Naive thymus-derived CD4-positive, alpha-beta T cell (primary cell): ENCODE measurements at regions of chr3 and their contacts with region 1.

Region 1: DNA sequence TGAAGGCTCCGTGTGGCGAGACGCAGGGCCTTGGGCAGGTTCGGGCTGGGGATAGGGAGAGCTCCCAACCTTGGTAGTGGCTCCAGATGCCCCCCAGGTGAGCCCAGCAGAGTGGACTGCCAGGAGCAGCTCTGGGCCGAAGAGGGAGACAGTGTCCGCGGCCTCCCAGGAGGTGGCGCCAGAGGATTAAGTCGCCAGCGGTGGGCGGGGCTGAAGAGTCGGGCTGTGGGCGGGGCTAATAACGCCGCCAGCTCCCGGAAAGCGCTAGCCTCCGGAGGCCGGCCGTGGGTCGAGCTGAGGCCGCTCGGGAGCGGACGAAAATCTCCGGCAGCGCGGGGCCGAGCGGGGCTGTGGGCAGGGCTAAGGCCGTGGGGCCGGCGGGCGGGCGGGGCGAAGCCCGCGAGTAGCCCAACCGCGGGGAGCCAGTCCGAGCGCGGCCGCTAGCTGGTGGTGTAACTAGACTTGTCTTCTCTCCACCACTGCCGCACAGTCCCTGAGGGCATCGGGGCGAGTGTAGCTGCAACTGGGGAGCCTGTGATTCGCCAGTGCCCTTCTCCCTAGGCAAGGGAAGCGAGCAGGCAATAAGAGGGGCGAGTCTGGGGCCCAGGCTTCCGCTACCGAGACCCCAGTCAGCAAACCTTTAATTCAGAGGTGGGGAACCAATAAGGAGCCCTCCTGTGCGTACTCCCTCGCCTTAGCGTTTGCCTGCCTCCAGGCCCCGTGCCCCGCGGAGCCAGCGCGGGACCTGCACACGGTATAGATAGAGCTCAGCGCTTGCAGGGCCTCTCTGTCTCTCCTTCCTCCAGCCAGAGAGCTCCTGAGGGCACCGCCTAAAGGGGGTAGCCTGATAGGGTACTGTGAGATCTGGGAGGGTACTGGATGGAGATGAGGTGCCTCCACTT is 14.4 kb upstream of the BSN start:
- DNase-seq: peak; percentile 77 to 97 (median 85)
- ATAC-seq: peak; percentile 99
- H3K4me3 ChIP-seq: peak overlapping the region; percentile 90
- H3K4me3 Mint-ChIP-seq: peak overlapping the region; percentile 75 to 84 (median 80)
- H3K27ac ChIP-seq: peak overlapping the region; percentile 78
- H3K27ac Mint-ChIP-seq: peak overlapping the region in 6 of 9 donors; percentile 14 to 69 (median 33)
- H3K4me1 ChIP-seq: peaks cover 4 to 5% of the 10 kb centered on the region in 2 donors
- H3K4me1 Mint-ChIP-seq: peaks cover 0 to 9% (median 5%) of the 10 kb centered on the region in 7 donors
- H3K27me3 ChIP-seq: no peaks in the 10 kb centered on the region
- H3K27me3 Mint-ChIP-seq: peaks cover 0 to 24% (median 4%) of the 10 kb centered on the region in 5 donors

Region 2: GRCh38 chr3:49411968-49412631 is 127.8 kb before region 1 on chr3 and contains the starts of genes RHOA and TCTA:
- CTCF ChIA-PET with region 1: no interaction called
- POLR2A ChIA-PET with region 1: no interaction called
- intact Hi-C with region 1: no loop called
- DNase-seq: peak; percentile 94 to 100 (median 99)
- ATAC-seq: peak; percentile 90
- H3K4me3 ChIP-seq: peak within 1 kb of the TSS; percentile 86
- H3K4me3 Mint-ChIP-seq: peak within 1 kb of the TSS; percentile 82 to 97 (median 94)
- H3K27ac ChIP-seq: peak within 1 kb of the TSS; percentile 96
- H3K27ac Mint-ChIP-seq: peak within 1 kb of the TSS; percentile 88 to 97 (median 95)
- H3K4me1 ChIP-seq: peaks cover 61 to 65% of the 10 kb centered on the region in 2 donors
- H3K4me1 Mint-ChIP-seq: peaks cover 51 to 82% (median 71%) of the 10 kb centered on the region in 7 donors
- H3K27me3 ChIP-seq: no peaks in the 10 kb centered on the region
- H3K27me3 Mint-ChIP-seq: peaks cover 0 to 2% (median 0%) of the 10 kb centered on the region in 5 donors
- total RNA-seq, gene RHOA: 212 to 411 (median 218) TPM
- total RNA-seq, gene TCTA: 24.9 to 34.5 (median 28.5) TPM

Region 3: DNA sequence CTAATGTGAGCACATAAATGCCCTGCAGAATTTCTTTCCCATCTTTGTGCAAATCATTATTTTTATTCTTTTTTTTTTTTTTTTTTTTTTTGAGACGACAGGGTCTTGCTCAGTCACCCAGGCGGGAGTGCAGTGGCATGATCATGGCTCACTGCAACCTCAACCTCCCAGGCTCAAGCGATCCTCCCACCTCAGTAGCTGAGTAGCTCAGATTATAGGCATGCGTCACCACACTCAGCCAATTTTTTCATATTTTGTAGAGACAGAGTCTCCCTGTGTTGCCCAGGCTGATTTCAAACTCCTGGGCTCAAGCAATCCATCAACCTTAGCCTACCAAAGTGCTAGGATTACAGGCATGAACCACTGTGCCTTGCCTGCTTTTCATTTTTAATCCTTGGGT is 46.9 kb before region 1 on chr3:
- CTCF ChIA-PET with region 1: no interaction called
- POLR2A ChIA-PET with region 1: no interaction called
- intact Hi-C with region 1: no loop called
- DNase-seq: no peak
- ATAC-seq: no peak
- H3K4me3 ChIP-seq: no peak overlapping the region
- H3K4me3 Mint-ChIP-seq: no peak overlapping the region
- H3K27ac ChIP-seq: no peak overlapping the region
- H3K27ac Mint-ChIP-seq: no peak overlapping the region
- H3K4me1 ChIP-seq: no peaks in the 10 kb centered on the region
- H3K4me1 Mint-ChIP-seq: peaks cover 5 to 16% (median 8%) of the 10 kb centered on the region in 7 donors
- H3K27me3 ChIP-seq: no peaks in the 10 kb centered on the region
- H3K27me3 Mint-ChIP-seq: no peaks in the 10 kb centered on the region

Region 4: GRCh38 chr3:49553692-49554632 is 14.1 kb after region 1 on chr3 and contains the start of gene BSN:
- CTCF ChIA-PET with region 1: interaction called, 14 read pairs
- POLR2A ChIA-PET with region 1: interaction called, 7 read pairs
- intact Hi-C with region 1: loop called (anchors 1 to 2 kb)
- DNase-seq: peak; percentile 81 to 92 (median 88)
- ATAC-seq: peak; percentile 91
- H3K4me3 ChIP-seq: peak within 1 kb of the TSS; percentile 75
- H3K4me3 Mint-ChIP-seq: peak within 1 kb of the TSS; percentile 80 to 92 (median 86)
- H3K27ac ChIP-seq: peak within 1 kb of the TSS; percentile 37
- H3K27ac Mint-ChIP-seq: peak within 1 kb of the TSS in 8 of 9 donors; percentile 20 to 92 (median 41)
- H3K4me1 ChIP-seq: peaks cover 0 to 20% of the 10 kb centered on the region in 2 donors
- H3K4me1 Mint-ChIP-seq: peaks cover 9 to 20% (median 13%) of the 10 kb centered on the region in 7 donors
- H3K27me3 ChIP-seq: no peaks in the 10 kb centered on the region
- H3K27me3 Mint-ChIP-seq: peaks cover 41 to 56% (median 46%) of the 10 kb centered on the region in 5 donors
- total RNA-seq, gene BSN: 0.12 to 0.16 (median 0.14) TPM

Region 5: GRCh38 chr3:49666592-49666991 is 126.7 kb after region 1 on chr3:
- CTCF ChIA-PET with region 1: interaction called, 111 read pairs
- POLR2A ChIA-PET with region 1: interaction called, 45 read pairs
- intact Hi-C with region 1: loop called (anchors 1 kb)
- DNase-seq: no peak
- ATAC-seq: no peak
- H3K4me3 ChIP-seq: no peak overlapping the region
- H3K4me3 Mint-ChIP-seq: no peak overlapping the region
- H3K27ac ChIP-seq: no peak overlapping the region
- H3K27ac Mint-ChIP-seq: no peak overlapping the region
- H3K4me1 ChIP-seq: no peaks in the 10 kb centered on the region
- H3K4me1 Mint-ChIP-seq: peaks cover 0 to 9% (median under 1%) of the 10 kb centered on the region in 7 donors
- H3K27me3 ChIP-seq: no peaks in the 10 kb centered on the region
- H3K27me3 Mint-ChIP-seq: peaks cover 0 to 8% (median 0%) of the 10 kb centered on the region in 5 donors

Region 6: DNA sequence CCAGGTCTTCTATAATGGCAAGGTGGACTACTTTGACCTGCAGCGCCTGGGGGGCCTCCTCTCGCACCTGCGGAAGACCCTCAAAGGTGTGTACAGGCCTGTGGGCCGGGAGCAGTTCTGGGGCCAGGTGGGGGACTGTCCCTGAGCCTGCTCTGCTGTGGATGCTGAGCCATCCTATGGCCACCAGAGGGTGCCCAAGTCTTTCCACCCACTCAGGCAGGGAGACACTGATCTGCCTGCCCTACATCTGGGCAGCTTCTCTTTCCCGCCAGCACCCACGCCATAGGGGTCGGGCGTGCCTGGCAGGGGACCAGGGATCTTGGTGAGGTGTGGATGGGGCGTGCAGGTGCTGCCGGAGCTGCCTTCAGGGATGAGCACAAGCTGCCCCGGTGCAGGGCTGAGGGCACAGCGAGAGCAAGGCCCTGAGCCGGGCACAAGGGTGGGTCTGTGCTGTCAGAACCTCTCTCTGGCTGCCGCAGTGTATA is 163.6 kb after region 1 on chr3:
- CTCF ChIA-PET with region 1: interaction called, 3 read pairs
- POLR2A ChIA-PET with region 1: no interaction called
- intact Hi-C with region 1: loop called in 1 of 2 experiments (anchors 1 kb)
- DNase-seq: peak; percentile 44 to 74 (median 65)
- ATAC-seq: peak; percentile 94
- H3K4me3 ChIP-seq: no peak overlapping the region
- H3K4me3 Mint-ChIP-seq: no peak overlapping the region
- H3K27ac ChIP-seq: no peak overlapping the region
- H3K27ac Mint-ChIP-seq: peak overlapping the region in 2 of 9 donors; percentile 8 to 52
- H3K4me1 ChIP-seq: no peaks in the 10 kb centered on the region
- H3K4me1 Mint-ChIP-seq: peaks cover 0 to 7% (median 0%) of the 10 kb centered on the region in 7 donors
- H3K27me3 ChIP-seq: no peaks in the 10 kb centered on the region
- H3K27me3 Mint-ChIP-seq: no peaks in the 10 kb centered on the region

Region 7: GRCh38 chr3:49906004-49906743 is 366.3 kb after region 1 on chr3:
- CTCF ChIA-PET with region 1: no interaction called
- POLR2A ChIA-PET with region 1: no interaction called
- intact Hi-C with region 1: loop called in 1 of 2 experiments (anchors 1 kb)
- DNase-seq: peak; percentile 16 to 60 (median 39)
- ATAC-seq: peak; percentile 53
- H3K4me3 ChIP-seq: no peak overlapping the region
- H3K4me3 Mint-ChIP-seq: peak overlapping the region; percentile 39 to 79 (median 64)
- H3K27ac ChIP-seq: peak overlapping the region; percentile 24
- H3K27ac Mint-ChIP-seq: peak overlapping the region; percentile 63 to 91 (median 87)
- H3K4me1 ChIP-seq: peaks cover 15 to 26% of the 10 kb centered on the region in 2 donors
- H3K4me1 Mint-ChIP-seq: peaks cover 18 to 41% (median 27%) of the 10 kb centered on the region in 7 donors
- H3K27me3 ChIP-seq: no peaks in the 10 kb centered on the region
- H3K27me3 Mint-ChIP-seq: no peaks in the 10 kb centered on the region

Region 8: DNA sequence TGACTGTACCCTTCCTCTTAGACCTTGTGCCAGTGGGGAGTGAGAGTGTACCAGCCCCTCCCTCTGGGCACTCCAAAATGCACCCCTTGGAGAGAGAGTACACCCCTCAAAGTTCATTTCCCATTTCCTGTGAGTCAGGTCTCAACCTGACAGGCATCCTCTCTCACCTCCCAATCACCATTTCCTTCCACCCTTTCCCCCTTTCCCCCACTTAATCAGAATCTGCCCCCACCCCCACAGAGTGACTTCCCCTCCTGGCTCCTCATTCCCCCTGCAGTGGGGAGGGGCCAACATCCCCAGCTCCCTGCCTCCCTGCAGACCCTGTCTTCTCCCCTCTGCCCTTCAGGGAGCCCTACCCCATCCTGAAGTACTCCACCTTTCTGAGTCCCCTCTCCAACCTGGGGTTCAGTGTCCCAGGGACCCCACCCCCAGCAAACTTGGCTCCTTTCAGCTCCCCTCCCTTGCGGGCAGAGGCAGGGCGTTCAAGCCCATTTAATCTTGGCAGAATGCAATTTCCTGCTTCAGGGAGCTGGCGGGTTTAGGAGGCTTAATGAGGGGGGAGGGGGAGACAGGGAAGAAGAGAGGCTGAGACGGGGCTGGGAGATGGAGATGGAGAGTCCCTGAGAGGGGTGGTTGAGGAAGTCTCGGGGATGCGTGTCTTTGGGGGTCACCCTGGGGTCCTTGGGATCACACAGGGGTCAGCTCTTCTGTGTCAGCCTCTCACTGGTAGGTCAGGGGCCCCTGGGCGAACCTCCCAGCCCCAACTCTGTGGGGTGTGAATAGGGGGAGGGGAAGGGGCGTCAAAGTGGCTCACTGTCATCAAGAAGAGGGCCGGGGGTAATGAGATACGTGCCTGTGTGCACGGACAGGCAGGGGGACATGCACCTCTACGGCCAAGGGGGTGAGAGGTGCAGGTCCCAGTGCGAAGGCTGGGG is 598.6 kb after region 1 on chr3:
- CTCF ChIA-PET with region 1: no interaction called
- POLR2A ChIA-PET with region 1: no interaction called
- intact Hi-C with region 1: no loop called
- DNase-seq: no peak
- ATAC-seq: no peak
- H3K4me3 ChIP-seq: no peak overlapping the region
- H3K4me3 Mint-ChIP-seq: peak overlapping the region in 1 of 10 donors; percentile 20
- H3K27ac ChIP-seq: no peak overlapping the region
- H3K27ac Mint-ChIP-seq: peak overlapping the region in 2 of 9 donors; percentile 38 to 48
- H3K4me1 ChIP-seq: peaks cover 0 to 7% of the 10 kb centered on the region in 2 donors
- H3K4me1 Mint-ChIP-seq: peaks cover 6 to 11% (median 11%) of the 10 kb centered on the region in 7 donors
- H3K27me3 ChIP-seq: no peaks in the 10 kb centered on the region
- H3K27me3 Mint-ChIP-seq: peaks cover 0 to 4% (median 0%) of the 10 kb centered on the region in 5 donors